ENCODE measurements at regions of chr11 and their contacts with region 1.

Region 1: GRCh38 chr11:114400217-114400914 is at the starts of genes C11orf71 and RBM7:
- DNase-seq: peak; percentile 98
- H3K4me3 Mint-ChIP-seq: peak within 1 kb of the TSS; percentile 90
- H3K27ac Mint-ChIP-seq: peak within 1 kb of the TSS; percentile 97
- H3K4me1 Mint-ChIP-seq: peaks cover 44% of the 10 kb centered on the region
- H3K27me3 Mint-ChIP-seq: no peaks in the 10 kb centered on the region
- total RNA-seq, gene C11orf71: 7.5 to 7.6 TPM
- total RNA-seq, gene RBM7: 36.9 to 41.7 TPM

Region 2: DNA sequence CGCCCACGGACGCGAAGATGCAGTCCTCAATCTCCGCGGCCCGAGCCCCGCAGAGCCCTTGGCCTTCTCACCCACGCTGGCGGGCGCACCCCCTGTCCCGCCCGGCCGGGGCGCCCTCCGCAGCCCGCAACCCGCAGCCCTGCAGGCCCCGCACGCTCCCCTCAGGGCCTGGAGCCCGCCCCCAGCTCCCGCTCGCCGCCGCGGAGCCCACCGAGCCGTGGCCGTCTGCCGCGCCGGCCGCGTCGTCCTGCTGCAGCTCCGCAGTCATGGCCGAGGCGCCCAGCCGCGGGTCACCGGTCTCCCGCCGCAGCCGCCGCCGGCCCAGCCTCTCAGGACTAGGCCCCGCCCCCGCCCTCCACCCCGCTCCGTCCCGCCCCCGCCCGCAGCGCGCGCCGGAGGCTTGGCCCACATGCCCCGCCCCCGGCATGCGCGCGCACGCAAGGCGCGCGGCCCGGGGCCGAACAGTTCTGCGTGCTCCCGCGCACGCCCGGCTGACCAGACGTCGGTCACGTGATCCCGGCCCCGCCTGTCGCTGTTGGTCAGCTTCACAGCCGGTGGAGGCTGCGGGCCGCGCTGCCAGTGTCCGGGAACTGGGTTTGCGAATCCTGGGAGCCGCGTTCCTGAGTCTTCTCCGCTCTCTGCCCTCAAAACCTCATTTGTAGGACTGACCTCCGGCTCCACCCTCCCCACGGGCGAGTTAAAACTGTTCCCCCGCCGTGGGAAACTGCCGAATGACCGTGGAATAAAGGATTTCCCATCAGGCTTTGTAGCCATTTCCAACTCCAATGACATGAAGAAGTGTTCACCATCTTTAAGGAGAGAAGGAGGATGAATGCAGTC is 524.9 kb before region 1 on chr11 and contains the start of gene USP28:
- CTCF ChIA-PET with region 1: no interaction called
- intact Hi-C with region 1: loop called (anchors 1 kb)
- DNase-seq: peak; percentile 71
- H3K4me3 Mint-ChIP-seq: peak within 1 kb of the TSS; percentile 95
- H3K27ac Mint-ChIP-seq: peak within 1 kb of the TSS; percentile 87
- H3K4me1 Mint-ChIP-seq: peaks cover 34% of the 10 kb centered on the region
- H3K27me3 Mint-ChIP-seq: no peaks in the 10 kb centered on the region
- total RNA-seq, gene USP28: 26.1 to 26.8 TPM

Region 3: GRCh38 chr11:114348200-114349191 is 51.9 kb before region 1 on chr11:
- CTCF ChIA-PET with region 1: no interaction called
- intact Hi-C with region 1: loop called (anchors 2 kb)
- DNase-seq: peak; percentile 64
- H3K4me3 Mint-ChIP-seq: no peak overlapping the region
- H3K27ac Mint-ChIP-seq: no peak overlapping the region
- H3K4me1 Mint-ChIP-seq: peaks cover 3% of the 10 kb centered on the region
- H3K27me3 Mint-ChIP-seq: no peaks in the 10 kb centered on the region